Calu3 (cell line): ENCODE measurements at regions of chr11 and their contacts with region 1.

Region 1: GRCh38 chr11:29019960-29020683 is 911.9 kb downstream of the METTL15 start:
- DNase-seq: peak; percentile 38
- H3K4me3 Mint-ChIP-seq: no peak overlapping the region
- H3K27ac Mint-ChIP-seq: peak overlapping the region; percentile 34
- H3K4me1 Mint-ChIP-seq: peaks cover 37% of the 10 kb centered on the region
- H3K27me3 Mint-ChIP-seq: no peaks in the 10 kb centered on the region
- CTCF ChIP-seq: peak; percentile 44

Region 2: GRCh38 chr11:28836285-28837081 is 183.6 kb before region 1 on chr11:
- CTCF ChIA-PET with region 1: interaction called, 8 read pairs
- intact Hi-C with region 1: loop called (anchors 2 kb)
- DNase-seq: peak; percentile 60
- H3K4me3 Mint-ChIP-seq: peak overlapping the region; percentile 59
- H3K27ac Mint-ChIP-seq: peak overlapping the region; percentile 96
- H3K4me1 Mint-ChIP-seq: peaks cover 55% of the 10 kb centered on the region
- H3K27me3 Mint-ChIP-seq: no peaks in the 10 kb centered on the region
- CTCF ChIP-seq: no peak

Region 3: GRCh38 chr11:29159552-29160465 is 139.7 kb after region 1 on chr11:
- CTCF ChIA-PET with region 1: interaction called, 11 read pairs
- intact Hi-C with region 1: loop called (anchors 5 kb)
- DNase-seq: peak; percentile 71
- H3K4me3 Mint-ChIP-seq: no peak overlapping the region
- H3K27ac Mint-ChIP-seq: no peak overlapping the region
- H3K4me1 Mint-ChIP-seq: peaks cover 15% of the 10 kb centered on the region
- H3K27me3 Mint-ChIP-seq: no peaks in the 10 kb centered on the region
- CTCF ChIP-seq: peak; percentile 78

Region 4: GRCh38 chr11:29328961-29329441 is 308.9 kb after region 1 on chr11:
- CTCF ChIA-PET with region 1: interaction called, 3 read pairs
- intact Hi-C with region 1: loop called (anchors 5 kb)
- DNase-seq: peak; percentile 24
- H3K4me3 Mint-ChIP-seq: no peak overlapping the region
- H3K27ac Mint-ChIP-seq: no peak overlapping the region
- H3K4me1 Mint-ChIP-seq: peaks cover 36% of the 10 kb centered on the region
- H3K27me3 Mint-ChIP-seq: no peaks in the 10 kb centered on the region
- CTCF ChIP-seq: peak; percentile 73